IMR-90 (cell line): ENCODE measurements at regions of chr19 and their contacts with region 1.

Region 1: DNA sequence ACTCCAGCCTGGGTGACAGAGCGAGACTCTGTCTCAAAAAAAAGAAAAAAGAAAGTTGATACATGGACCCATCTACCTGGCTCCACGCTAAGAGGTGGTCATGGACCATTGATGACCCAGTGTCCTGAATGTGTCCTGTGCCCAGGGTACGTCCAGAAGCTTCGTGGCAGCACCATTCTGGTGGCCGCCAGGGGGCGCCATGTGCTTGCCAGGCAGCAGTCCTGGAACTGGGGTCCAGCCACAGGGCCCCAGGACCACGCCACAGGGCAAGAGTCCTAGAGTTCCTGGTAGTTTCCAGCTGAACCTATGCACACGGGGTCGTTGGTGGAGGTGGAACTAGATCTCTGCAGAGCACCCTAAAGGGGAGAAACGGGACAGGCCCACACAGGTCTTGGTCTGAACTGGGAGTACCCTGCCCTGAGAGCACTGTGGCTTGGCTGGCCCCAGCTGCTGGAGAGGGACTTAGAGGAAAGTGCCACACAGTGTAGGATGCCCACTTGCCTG is 19.9 kb upstream of the FBXO27 start:
- DNase-seq: peak; percentile 58
- ATAC-seq: peak; percentile 81
- H3K4me3 ChIP-seq: no peak overlapping the region
- H3K27ac ChIP-seq: no peak overlapping the region
- H3K4me1 ChIP-seq: no peaks in the 10 kb centered on the region
- H3K27me3 ChIP-seq: peaks cover 10% of the 10 kb centered on the region
- CTCF ChIP-seq: peak; percentile 61
- POLR2A ChIP-seq: no peak
- RAD21 ChIP-seq: peak; percentile 71

Region 2: DNA sequence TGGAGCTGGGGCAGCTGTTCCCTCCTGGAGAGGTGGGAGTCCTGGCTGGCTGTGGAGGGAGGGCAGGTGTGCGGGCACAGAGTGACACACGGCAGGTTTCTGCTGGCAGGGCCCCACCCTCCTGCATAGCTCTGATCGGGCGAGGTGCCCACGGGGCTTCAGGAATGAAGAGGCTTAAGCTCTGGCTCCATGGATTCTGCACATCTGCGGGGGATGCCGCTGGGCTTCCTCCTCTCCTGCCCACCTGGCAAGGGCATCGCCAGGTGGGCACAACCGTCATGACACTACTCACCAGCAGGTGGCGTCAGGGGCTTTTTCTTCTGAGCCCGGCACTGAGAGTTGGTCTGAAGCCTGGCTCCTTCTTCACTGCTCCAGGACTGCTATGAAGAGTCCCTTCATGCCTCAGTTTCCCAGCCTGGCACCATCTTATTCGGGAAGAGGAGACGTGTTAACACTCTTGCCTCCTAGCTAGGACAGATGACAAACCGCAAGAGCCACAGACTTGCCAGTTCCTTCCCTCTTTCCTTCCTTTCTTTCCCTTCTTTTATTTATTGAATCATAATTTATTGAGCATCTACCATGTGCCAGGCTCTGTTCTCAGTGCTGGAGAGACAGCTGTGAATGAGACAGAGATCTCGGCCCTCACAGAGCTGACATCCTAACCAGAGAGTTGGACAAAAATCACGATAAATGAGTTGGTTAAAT is 58.1 kb after region 1 on chr19:
- CTCF ChIA-PET with region 1: no interaction called
- POLR2A ChIA-PET with region 1: no interaction called
- dilution Hi-C with region 1: no loop called
- in situ Hi-C with region 1: no loop called
- intact Hi-C with region 1: loop called (anchors 2 kb)
- DNase-seq: no peak
- ATAC-seq: peak; percentile 87
- H3K4me3 ChIP-seq: no peak overlapping the region
- H3K27ac ChIP-seq: no peak overlapping the region
- H3K4me1 ChIP-seq: no peaks in the 10 kb centered on the region
- H3K27me3 ChIP-seq: peaks cover 20% of the 10 kb centered on the region
- CTCF ChIP-seq: peak; percentile 60
- POLR2A ChIP-seq: no peak
- RAD21 ChIP-seq: peak; percentile 54